Activated T-helper 1 cell treated with anti-CD3 and anti-CD28 coated beads, Interleukin-12 subunit alpha, Interleukin-12 subunit beta, Interleukin-2, Interleukin-4 antibody, amounts not matched to agents 30 ng/mL and 10 ng/mL and 1 ng/mL, durations not matched to agents 14 hours and 24 hours and 36 hours (primary cell): ENCODE measurements at regions of chr15 and their contacts with region 1.

Region 1: GRCh38 chr15:101188637-101189408 is 63.0 kb downstream of the CHSY1 start:
- DNase-seq: no peak
- H3K4me3 Mint-ChIP-seq: peak overlapping the region; percentile 41
- H3K27ac Mint-ChIP-seq: peak overlapping the region; percentile 94
- H3K4me1 Mint-ChIP-seq: peaks cover 87% of the 10 kb centered on the region
- H3K27me3 Mint-ChIP-seq: no peaks in the 10 kb centered on the region

Region 2: DNA sequence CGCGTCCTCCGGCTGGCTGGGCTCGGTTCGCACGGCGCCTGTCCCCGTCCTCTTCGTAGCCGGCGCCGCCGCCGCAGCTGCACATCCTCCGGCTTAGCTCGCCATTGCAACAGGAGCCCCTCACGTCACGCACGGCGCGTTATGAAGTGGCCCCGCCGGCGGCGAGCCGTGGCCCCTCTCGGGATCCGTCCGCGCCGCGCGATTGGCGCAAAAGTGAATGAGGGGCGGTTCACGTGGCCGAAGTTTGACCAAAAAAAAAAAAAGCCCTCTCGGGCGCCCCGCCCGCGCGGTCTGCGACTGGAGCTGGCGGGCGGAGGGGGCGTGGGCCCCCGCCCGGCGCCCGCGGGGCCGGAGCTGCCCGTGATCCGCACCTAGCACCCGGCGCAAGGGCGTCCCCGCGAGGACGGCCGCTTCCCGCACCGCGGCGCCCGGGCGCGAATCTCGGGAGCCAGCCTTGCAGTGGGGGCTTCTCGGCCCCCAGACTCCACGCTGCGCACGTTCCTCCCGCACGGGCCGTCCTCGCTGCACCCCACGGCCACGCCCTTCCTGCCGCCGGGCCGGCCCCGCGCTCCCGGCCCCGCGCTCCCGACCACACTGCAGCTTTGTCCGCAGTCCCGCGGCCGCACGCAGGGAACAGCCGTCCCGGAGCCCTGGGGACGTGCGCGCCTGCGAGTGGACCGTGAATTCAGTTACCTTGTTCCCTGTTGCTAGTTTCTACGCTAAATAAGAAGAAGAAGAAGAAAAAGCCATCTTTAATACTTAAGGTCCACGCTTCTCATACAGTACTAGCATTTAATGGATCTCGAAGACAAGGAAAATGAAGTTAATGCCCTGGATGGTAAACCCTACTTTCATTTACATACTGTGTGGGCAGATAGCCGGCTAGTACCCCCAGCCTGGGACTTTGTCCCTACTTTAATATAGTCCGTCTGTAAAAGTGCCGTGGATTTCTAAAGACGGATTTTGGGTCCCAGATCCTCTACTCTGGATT is 63.3 kb after region 1 on chr15 and contains the start of gene CHSY1:
- intact Hi-C with region 1: loop called (anchors 1 kb)
- DNase-seq: peak; percentile 88
- H3K4me3 Mint-ChIP-seq: peak within 1 kb of the TSS; percentile 91
- H3K27ac Mint-ChIP-seq: peak within 1 kb of the TSS; percentile 90
- H3K4me1 Mint-ChIP-seq: peaks cover 69% of the 10 kb centered on the region
- H3K27me3 Mint-ChIP-seq: no peaks in the 10 kb centered on the region
- total RNA-seq, gene CHSY1: 76.3 and 78.0 TPM in 2 replicates